Activated T-helper 2 cell treated with anti-CD3 and anti-CD28 coated beads, Interferon-gamma antibody, Interleukin-2, Interleukin-4, amounts not matched to agents 10 μg/mL and 5 μg/mL and 100 μg/mL, durations not matched to agents 14 hours and 24 hours and 36 hours (primary cell): ENCODE measurements at regions of chrX and their contacts with region 1.

Region 1: DNA sequence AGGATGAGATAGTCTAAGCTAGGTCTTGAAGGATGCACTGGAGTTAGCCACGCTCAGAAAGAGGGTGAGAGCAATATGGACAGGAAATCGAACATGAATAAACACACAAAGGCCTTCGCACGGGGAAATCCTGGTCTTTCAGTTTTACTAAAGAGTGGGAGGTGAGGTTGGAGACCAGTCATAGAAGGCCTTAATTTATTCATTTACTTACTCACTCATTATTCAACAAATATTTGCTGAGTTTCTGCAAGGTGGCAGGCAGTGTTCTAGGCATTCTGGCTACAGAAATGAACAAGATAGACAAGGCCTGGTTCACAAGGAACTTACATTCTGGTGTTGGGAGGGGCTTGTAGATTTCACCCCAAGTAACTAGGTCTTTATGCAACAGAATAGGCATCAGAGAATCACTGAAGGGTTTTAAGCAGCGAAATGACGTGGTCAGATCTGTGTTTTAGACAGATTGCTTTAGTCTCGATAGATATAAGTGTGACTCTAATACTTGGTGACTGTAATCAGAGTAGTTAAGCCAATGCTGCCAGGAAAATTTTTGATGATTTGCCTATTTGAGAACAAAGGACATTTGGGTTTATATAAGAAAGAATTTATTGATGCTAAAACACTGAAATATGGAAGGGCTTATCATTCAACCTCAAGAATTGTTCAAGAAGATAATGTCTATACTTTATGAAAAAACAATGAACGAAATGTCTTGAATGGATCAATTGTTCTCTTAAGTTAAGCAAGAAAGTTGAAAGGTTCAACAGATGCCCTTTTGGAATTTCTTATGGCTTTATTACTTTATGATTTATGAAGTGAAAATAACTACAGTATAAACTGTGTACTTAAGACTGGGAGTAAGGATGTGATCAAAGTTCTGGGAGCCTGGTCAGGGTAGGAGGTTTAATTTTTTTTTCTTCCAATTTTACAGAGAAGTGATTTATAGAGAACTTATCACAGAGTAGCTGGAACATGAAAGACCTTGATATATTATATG is 184.4 kb upstream of the CASK start:
- DNase-seq: no peak
- H3K4me3 Mint-ChIP-seq: no peak overlapping the region
- H3K27ac Mint-ChIP-seq: no peak overlapping the region
- H3K4me1 Mint-ChIP-seq: peaks cover 25% of the 10 kb centered on the region
- H3K27me3 Mint-ChIP-seq: no peaks in the 10 kb centered on the region

Region 2: GRCh38 chrX:41666251-41666650 is 441.5 kb before region 1 on chrX:
- intact Hi-C with region 1: no loop called
- DNase-seq: no peak
- H3K4me3 Mint-ChIP-seq: peak overlapping the region; percentile 45
- H3K27ac Mint-ChIP-seq: peak overlapping the region; percentile 86
- H3K4me1 Mint-ChIP-seq: peaks cover 46% of the 10 kb centered on the region
- H3K27me3 Mint-ChIP-seq: no peaks in the 10 kb centered on the region

Region 3: DNA sequence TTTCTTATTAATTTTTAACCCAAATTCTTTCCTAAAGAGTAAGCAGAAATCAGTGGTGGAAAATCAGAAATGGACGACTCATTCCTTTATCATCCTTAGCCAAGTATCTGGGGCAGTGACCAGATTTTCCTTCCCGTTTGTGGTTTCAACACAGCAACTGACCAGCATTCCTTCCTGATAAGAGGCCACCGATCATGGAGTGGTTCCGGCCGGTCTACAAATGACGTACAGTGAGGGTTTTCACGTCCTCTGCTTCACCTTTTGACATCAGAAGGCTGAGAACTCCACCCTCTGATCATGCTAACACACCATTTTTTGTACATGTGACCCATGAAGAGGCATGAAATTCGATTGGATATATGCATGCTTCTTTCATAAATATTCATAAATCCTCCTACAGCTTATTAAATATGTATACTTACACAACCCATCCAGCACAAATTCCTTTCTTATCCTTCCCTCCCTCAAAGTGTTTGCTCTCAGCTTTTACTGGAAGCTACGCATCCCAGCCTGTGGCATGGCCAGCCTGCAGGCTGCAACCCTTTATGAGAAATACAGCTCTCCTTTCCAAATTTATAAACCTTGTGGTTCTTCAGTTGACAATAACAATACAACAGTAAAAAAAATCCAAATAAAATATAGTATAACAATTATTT is 11.4 kb before region 1 on chrX:
- intact Hi-C with region 1: loop called (anchors 1 kb)
- DNase-seq: no peak
- H3K4me3 Mint-ChIP-seq: no peak overlapping the region
- H3K27ac Mint-ChIP-seq: no peak overlapping the region
- H3K4me1 Mint-ChIP-seq: peaks cover 6% of the 10 kb centered on the region
- H3K27me3 Mint-ChIP-seq: no peaks in the 10 kb centered on the region

Region 4: DNA sequence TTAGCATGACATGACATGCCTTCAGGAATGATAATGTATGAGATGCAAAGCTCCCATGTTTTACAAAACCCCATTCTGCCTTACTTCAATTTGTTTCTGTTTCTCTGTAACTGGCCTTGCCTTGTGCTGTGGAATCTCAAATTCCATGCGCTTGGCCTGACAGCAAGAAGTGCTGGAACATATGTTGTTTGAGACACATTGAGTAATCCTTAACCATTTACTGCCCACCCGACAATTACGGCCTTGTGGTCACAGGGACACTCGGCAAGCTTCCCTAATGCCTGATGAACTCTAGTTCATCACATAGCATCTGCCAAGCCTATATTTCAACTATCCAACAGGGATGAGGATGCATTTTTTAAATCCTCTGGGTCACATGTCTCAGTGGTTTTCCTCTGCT is 42.0 kb after region 1 on chrX:
- intact Hi-C with region 1: no loop called
- DNase-seq: no peak
- H3K4me3 Mint-ChIP-seq: no peak overlapping the region
- H3K27ac Mint-ChIP-seq: no peak overlapping the region
- H3K4me1 Mint-ChIP-seq: peaks cover 5% of the 10 kb centered on the region
- H3K27me3 Mint-ChIP-seq: no peaks in the 10 kb centered on the region